ENCODE measurements at regions of chr19 and their contacts with region 1.

Region 1: GRCh38 chr19:37779127-37780005 is at the start of gene ZNF573:
- DNase-seq: peak; percentile 91
- ATAC-seq: peak; percentile 84
- H3K4me3 ChIP-seq: peak within 1 kb of the TSS; percentile 71 to 81 (median 74)
- H3K4me3 Mint-ChIP-seq: peak within 1 kb of the TSS; percentile 96
- H3K27ac ChIP-seq: peak within 1 kb of the TSS; percentile 86 to 93
- H3K27ac Mint-ChIP-seq: peak within 1 kb of the TSS; percentile 97
- H3K4me1 ChIP-seq: peaks cover 7 to 11% of the 10 kb centered on the region in 2 donors
- H3K4me1 Mint-ChIP-seq: peaks cover 39% of the 10 kb centered on the region
- H3K27me3 ChIP-seq: no peaks in the 10 kb centered on the region
- H3K27me3 Mint-ChIP-seq: no peaks in the 10 kb centered on the region
- CTCF ChIP-seq: peak; percentile 18
- total RNA-seq, gene ZNF573: 28.8 and 31.1 TPM in 2 replicates

Region 2: GRCh38 chr19:37370880-37371661 is 408.3 kb before region 1 on chr19 and contains the start of gene ZNF527:
- CTCF ChIA-PET with region 1: no interaction called
- POLR2A ChIA-PET with region 1: no interaction called
- intact Hi-C with region 1: loop called (anchors 2 kb)
- DNase-seq: peak; percentile 98
- ATAC-seq: peak; percentile 96
- H3K4me3 ChIP-seq: peak within 1 kb of the TSS; percentile 59 to 87 (median 79)
- H3K4me3 Mint-ChIP-seq: peak within 1 kb of the TSS; percentile 99
- H3K27ac ChIP-seq: peak within 1 kb of the TSS; percentile 73 to 87
- H3K27ac Mint-ChIP-seq: peak within 1 kb of the TSS; percentile 98
- H3K4me1 ChIP-seq: peaks cover 5 to 14% of the 10 kb centered on the region in 2 donors
- H3K4me1 Mint-ChIP-seq: peaks cover 12% of the 10 kb centered on the region
- H3K27me3 ChIP-seq: no peaks in the 10 kb centered on the region
- H3K27me3 Mint-ChIP-seq: no peaks in the 10 kb centered on the region
- CTCF ChIP-seq: peak; percentile 12
- total RNA-seq, gene ZNF527: 9.0 and 11.4 TPM in 2 replicates

Region 3: GRCh38 chr19:37655689-37656371 is 123.5 kb before region 1 on chr19:
- CTCF ChIA-PET with region 1: no interaction called
- POLR2A ChIA-PET with region 1: interaction called, 4 read pairs
- intact Hi-C with region 1: loop called (anchors 1 kb)
- DNase-seq: peak; percentile 89
- ATAC-seq: peak; percentile 69
- H3K4me3 ChIP-seq: peak overlapping the region; percentile 36 to 89 (median 80)
- H3K4me3 Mint-ChIP-seq: peak overlapping the region; percentile 98
- H3K27ac ChIP-seq: peak overlapping the region; percentile 91 to 93
- H3K27ac Mint-ChIP-seq: peak overlapping the region; percentile 97
- H3K4me1 ChIP-seq: peaks cover 15 to 19% of the 10 kb centered on the region in 2 donors
- H3K4me1 Mint-ChIP-seq: peaks cover 30% of the 10 kb centered on the region
- H3K27me3 ChIP-seq: no peaks in the 10 kb centered on the region
- H3K27me3 Mint-ChIP-seq: no peaks in the 10 kb centered on the region
- CTCF ChIP-seq: no peak

Region 4: GRCh38 chr19:37719111-37719926 is 60.0 kb before region 1 on chr19 and contains the start of gene ZNF607:
- CTCF ChIA-PET with region 1: no interaction called
- POLR2A ChIA-PET with region 1: no interaction called
- intact Hi-C with region 1: loop called (anchors 1 kb)
- DNase-seq: peak; percentile 94
- ATAC-seq: peak; percentile 95
- H3K4me3 ChIP-seq: peak within 1 kb of the TSS; percentile 51 to 86 (median 82)
- H3K4me3 Mint-ChIP-seq: peak within 1 kb of the TSS; percentile 90
- H3K27ac ChIP-seq: peak within 1 kb of the TSS; percentile 62 to 68
- H3K27ac Mint-ChIP-seq: peak within 1 kb of the TSS; percentile 89
- H3K4me1 ChIP-seq: peaks cover 7 to 12% of the 10 kb centered on the region in 2 donors
- H3K4me1 Mint-ChIP-seq: peaks cover 14% of the 10 kb centered on the region
- H3K27me3 ChIP-seq: no peaks in the 10 kb centered on the region
- H3K27me3 Mint-ChIP-seq: no peaks in the 10 kb centered on the region
- CTCF ChIP-seq: peak; percentile 52
- total RNA-seq, gene ZNF607: 19.4 and 21.5 TPM in 2 replicates